Head of caudate nucleus (tissue), 42 donors: ENCODE measurements at regions of chr11 and their contacts with region 1.

Region 1: GRCh38 chr11:111283945-111284481 is 14.3 kb upstream of the POU2AF3 start:
- DNase-seq: no peak

Region 2: DNA sequence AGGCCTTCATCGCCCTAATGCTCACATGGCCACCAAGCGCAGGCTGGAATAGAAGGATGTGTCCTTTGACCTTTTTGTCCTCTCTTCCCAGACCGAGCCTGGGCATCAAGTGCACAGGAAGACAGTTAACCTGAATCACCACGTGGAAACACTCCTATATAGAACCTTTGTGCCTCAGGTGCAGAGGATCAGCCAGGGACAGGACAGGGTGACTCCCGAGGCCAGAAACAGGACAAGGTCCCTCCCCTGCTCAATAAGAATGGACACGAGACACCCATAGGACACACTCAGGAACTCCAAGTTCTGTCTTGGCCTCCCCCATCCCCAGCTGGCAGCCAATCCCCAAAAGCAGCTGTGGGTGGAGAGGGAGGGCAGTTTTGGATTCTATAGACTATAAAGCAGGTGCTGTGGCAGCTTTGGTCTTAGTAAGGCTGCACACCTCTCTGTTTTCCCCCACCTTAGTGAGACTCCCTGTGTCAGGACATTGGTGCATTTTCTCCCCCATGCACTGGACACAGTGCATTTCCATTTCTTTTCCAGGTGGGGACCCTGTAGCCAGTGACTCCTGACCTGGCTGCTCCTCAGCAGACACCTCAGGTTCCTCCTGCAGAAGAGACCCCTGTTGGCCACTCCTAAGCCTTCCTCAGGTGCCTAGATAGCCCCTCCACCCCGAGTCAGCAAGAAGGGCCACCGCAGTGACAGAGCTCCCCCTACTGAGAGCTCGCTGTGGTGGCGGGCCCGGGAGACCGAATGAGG is 138.7 kb after region 1 on chr11:
- intact Hi-C with region 1: loop called (anchors 5 kb)
- DNase-seq: peak in 41 of 42 donors; percentile 28 to 84 (median 60)

Region 3: GRCh38 chr11:111446404-111447111 is 162.5 kb after region 1 on chr11:
- intact Hi-C with region 1: loop called (anchors 2 kb)
- DNase-seq: peak; percentile 56 to 94 (median 84)

Region 4: GRCh38 chr11:112280268-112281126 is 996.5 kb after region 1 on chr11:
- intact Hi-C with region 1: no loop called
- DNase-seq: peak; percentile 40 to 92 (median 74)